Right lobe of liver (tissue), 6 donors: ENCODE measurements at regions of chr18 and their contacts with region 1.

Region 1: DNA sequence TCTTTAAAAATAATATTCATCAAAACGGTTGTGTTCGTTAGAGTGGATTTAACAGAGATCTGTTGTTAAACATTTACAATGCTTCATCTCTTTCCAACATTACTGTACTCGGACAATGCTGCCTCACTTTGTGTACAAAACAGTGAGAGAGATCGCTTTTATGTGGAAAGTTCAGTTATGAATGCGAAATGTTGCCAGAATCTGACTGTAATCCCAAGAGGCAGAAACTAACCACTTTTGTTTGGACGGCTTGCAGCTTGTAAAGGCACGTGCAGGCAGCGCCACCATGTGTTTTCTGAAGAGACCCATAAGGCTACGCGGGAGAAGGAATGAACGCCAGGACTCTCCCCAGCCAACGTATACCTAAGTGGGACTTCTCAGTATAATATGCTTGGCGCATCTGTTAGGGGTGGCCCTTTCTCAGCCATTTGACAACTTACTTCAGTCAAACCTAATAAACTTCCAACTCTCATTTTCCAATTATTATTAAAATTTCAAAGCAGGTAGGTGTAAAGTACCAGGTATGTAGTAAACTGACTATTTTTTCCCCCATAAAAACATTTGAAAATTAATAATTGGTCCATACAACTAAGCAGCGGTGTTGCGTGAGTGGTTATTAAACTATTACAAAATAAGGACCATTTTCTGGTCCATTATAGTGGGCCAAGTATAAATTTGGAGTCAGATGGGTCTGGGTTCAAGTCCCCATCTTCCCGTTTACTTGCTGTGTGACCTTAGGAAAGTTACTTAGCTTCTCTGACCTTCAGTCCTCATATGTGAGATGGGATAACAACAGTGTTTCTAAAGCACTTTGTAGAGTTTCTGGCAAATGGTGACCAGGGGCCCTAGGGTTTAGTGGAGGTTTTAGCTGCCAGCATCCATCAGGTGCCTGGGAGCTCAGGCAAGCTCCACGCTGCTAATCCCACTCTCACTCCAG is 5.6 kb upstream of the NAPG start:
- DNase-seq: peak; percentile 78 to 80 (median 79)
- ATAC-seq: peak; percentile 89 to 95 (median 92)
- H3K4me3 ChIP-seq: no peak overlapping the region
- H3K27ac ChIP-seq: no peak overlapping the region
- H3K4me1 ChIP-seq: peaks cover 0 to 3% (median 0%) of the 10 kb centered on the region in 4 donors
- H3K27me3 ChIP-seq: no peaks in the 10 kb centered on the region
- CTCF ChIP-seq: peak; percentile 68 to 76 (median 74)
- POLR2A ChIP-seq: no peak

Region 2: GRCh38 chr18:9971313-9971920 is 548.9 kb before region 1 on chr18:
- intact Hi-C with region 1: loop called (anchors 5 kb)
- DNase-seq: peak in 1 of 3 donors; percentile 73
- ATAC-seq: peak; percentile 87 to 97 (median 93)
- H3K4me3 ChIP-seq: no peak overlapping the region
- H3K27ac ChIP-seq: no peak overlapping the region
- H3K4me1 ChIP-seq: no peaks in the 10 kb centered on the region
- H3K27me3 ChIP-seq: no peaks in the 10 kb centered on the region
- CTCF ChIP-seq: peak; percentile 73 to 83 (median 81)
- POLR2A ChIP-seq: no peak

Region 3: GRCh38 chr18:10465174-10465939 is 54.9 kb before region 1 on chr18:
- intact Hi-C with region 1: loop called in 1 of 2 experiments (anchors 10 kb)
- DNase-seq: no peak
- ATAC-seq: no peak
- H3K4me3 ChIP-seq: no peak overlapping the region
- H3K27ac ChIP-seq: no peak overlapping the region
- H3K4me1 ChIP-seq: no peaks in the 10 kb centered on the region
- H3K27me3 ChIP-seq: no peaks in the 10 kb centered on the region
- CTCF ChIP-seq: no peak
- POLR2A ChIP-seq: no peak